Activated CD4-positive, alpha-beta memory T cell treated with anti-CD3 and anti-CD28 coated beads, Interleukin-2, amount 10 ng/mL, durations not matched to agents 7 days and 5 days (primary cell): ENCODE measurements at regions of chr6 and their contacts with region 1.

Region 1: DNA sequence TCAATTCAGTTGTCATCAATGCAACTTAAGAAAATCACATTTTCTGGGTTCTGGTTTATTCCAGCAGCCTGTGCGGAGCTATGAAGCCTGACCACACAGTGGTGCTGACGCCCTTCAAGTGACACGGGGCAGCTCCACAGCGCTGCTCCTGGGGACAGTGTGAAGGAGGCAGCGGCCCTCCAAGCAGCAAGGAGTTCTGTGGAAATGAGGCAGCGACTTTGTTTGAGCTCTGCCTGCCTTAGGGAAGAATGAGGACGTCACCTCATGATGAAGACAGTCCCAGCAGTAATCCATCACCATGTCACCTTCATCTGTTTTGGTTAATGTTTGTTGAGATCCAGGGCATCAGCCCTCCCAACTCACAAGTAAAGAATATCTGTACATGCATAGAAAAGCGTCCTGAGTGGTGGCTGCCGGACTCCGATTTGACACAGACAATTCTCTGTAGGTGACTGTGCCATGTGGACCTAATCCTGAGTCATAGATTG is 168.5 kb upstream of the UST start:
- DNase-seq: peak; percentile 53
- H3K4me3 Mint-ChIP-seq: no peak overlapping the region
- H3K27ac Mint-ChIP-seq: no peak overlapping the region
- H3K4me1 Mint-ChIP-seq: peaks cover 3% of the 10 kb centered on the region
- H3K27me3 Mint-ChIP-seq: peaks cover 22% of the 10 kb centered on the region

Region 2: DNA sequence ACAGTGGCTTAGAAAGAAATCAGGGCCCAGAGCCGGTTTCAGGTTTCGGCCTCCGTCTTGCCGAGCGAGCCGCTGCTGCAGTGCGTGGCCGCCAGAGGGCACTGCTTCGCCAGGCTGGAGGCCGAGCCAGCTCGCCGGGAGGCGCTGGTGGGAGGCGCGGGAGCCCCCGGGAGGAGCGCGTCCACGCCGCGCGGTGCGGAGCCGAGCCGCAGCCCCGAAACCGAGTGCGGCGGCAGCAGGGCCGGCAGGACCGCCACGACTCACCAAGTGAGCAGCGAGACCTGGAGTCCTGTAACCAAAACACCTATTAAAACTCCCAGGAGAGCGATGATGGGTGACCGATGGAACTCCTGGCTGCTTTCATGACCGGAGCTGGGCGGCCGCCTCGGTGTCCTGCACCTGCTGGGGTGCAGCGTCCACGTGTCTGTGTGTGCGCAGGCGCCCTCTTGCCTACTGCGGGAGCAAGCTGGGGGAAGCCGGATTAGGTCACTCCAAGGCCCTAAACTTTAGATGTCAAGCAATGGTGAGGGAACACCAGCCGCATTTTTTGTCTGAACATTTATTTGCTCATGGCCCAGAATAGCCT is 18.3 kb before region 1 on chr6:
- CTCF ChIA-PET with region 1: interaction called, 11 read pairs
- POLR2A ChIA-PET with region 1: no interaction called
- DNase-seq: peak; percentile 70
- H3K4me3 Mint-ChIP-seq: no peak overlapping the region
- H3K27ac Mint-ChIP-seq: no peak overlapping the region
- H3K4me1 Mint-ChIP-seq: peaks cover 16% of the 10 kb centered on the region
- H3K27me3 Mint-ChIP-seq: peaks cover 31% of the 10 kb centered on the region